A549 (cell line): ENCODE measurements at regions of chr17 and their contacts with region 1.

Region 1: GRCh38 chr17:78598013-78598471 is 20.8 kb upstream of the DNAH17 start:
- DNase-seq: no peak
- ATAC-seq: no peak
- H3K4me3 ChIP-seq: no peak overlapping the region
- H3K27ac ChIP-seq: peak overlapping the region; percentile 94 to 99
- H3K4me1 ChIP-seq: peaks cover 74% of the 10 kb centered on the region
- CTCF ChIP-seq: no peak
- EP300 ChIP-seq: no peak
- POLR2A ChIP-seq: no peak
- RAD21 ChIP-seq: no peak

Region 2: DNA sequence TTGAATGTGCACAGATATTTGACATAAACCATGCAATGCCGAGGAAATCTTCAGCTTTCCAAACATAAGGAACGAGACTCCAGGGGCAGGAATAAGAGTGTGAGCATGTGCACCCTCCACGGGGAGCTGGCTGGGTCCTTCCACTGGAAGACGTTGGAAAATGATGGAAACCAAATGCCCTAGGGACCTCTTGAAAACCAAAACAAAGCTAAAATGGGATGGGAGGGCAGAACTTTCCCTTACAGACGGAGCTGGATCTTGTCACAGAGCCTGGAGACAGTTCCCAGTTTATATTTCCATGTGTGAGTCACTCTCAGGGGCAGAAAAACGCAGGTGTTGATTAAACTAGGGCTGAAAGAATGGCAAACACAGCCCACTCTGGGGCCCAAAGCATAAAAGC is 13.6 kb after region 1 on chr17:
- CTCF ChIA-PET with region 1: interaction called, 34 read pairs
- POLR2A ChIA-PET with region 1: no interaction called
- DNase-seq: no peak
- ATAC-seq: no peak
- H3K4me3 ChIP-seq: no peak overlapping the region
- H3K27ac ChIP-seq: peak overlapping the region in 1 of 2 experiments; percentile 4; a peak in 2 of 6 replicates
- H3K4me1 ChIP-seq: 0 out of 3 replicates have a peak, but pooled peaks cover 4% of the 10 kb centered on the region
- CTCF ChIP-seq: no peak
- EP300 ChIP-seq: no peak
- POLR2A ChIP-seq: no peak
- RAD21 ChIP-seq: no peak